ENCODE measurements at regions of chr12 and their contacts with region 1.

Region 1: DNA sequence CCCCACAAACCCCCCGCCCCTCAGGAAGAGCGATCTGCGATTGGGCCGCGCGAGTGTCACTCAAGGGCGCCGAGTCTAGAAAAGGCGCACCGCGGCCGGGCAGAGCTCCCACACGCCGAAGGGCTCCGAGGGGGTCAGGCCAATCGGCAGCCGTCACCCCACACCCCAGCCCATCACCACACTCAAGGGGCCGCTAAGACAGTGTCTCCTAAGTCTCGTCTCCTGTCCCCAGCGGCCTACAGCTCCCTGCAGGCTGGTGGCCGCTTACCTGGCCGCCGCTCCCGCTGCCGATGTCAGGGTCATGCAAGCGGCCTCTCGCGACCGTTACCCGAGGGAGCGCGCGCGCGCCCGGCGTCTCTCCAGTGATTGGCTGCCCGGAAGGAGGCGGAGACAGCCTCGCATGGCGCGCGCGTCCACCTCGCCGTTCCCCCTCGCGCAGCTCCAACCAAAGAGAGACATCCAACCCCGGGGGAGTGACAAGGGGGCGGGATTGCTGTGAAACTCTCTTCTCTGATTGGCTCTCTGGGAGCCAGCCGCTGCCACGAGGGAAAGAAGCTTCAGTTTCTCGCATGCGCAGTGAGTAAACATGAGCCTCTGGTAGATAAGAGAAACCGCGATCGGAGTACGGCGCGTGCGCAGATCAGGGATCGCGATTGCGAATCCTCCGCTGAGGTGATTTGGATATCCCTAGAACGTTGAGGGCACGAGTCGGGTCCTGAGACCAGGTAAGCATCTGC is at the starts of genes MPHOSPH9 and MTRFR:
- DNase-seq: peak; percentile 100
- H3K4me3 ChIP-seq: peak within 1 kb of the TSS; percentile 77 to 93 (median 89)
- H3K27ac ChIP-seq: peak within 1 kb of the TSS; percentile 72
- H3K4me1 ChIP-seq: peaks cover 12% of the 10 kb centered on the region
- H3K27me3 ChIP-seq: no peaks in the 10 kb centered on the region
- CTCF ChIP-seq: no peak
- total RNA-seq, gene MPHOSPH9: 23.2 to 30.2 TPM
- total RNA-seq, gene MTRFR: 11.5 to 20.5 TPM

Region 2: DNA sequence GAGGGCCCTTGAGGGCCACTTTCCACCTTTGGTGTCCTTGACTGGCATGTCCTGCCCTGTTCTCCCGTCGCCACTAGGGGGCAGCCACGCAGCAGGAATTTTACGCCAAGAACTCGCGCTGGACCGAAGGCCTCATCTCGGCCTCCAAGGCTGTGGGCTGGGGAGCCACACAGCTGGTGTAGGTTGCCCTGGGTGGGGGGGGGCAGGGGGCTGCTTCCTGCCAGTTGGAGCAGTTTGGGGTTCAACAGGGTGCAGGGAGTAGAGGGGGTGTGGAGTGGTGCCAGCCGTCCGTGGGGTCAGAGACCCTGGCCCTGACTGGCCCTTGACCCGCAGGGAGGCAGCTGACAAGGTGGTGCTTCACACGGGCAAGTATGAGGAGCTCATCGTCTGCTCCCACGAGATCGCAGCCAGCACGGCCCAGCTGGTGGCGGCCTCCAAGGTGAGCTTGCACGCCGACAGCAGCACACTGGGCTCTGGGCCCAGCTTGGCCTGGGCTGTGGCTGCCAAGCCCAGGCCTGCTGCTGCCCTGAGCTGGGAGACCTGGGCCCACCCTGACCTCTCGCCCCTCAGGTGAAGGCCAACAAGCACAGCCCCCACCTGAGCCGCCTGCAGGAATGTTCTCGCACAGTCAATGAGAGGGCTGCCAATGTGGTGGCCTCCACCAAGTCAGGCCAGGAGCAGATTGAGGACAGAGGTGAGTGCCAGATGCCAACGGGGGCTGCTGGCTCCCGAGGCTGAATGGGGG is 372.5 kb before region 1 on chr12:
- CTCF ChIA-PET with region 1: interaction called, 3 read pairs
- dilution Hi-C with region 1: no loop called
- in situ Hi-C with region 1: no loop called
- intact Hi-C with region 1: loop called (anchors 1 kb)
- DNase-seq: peak; percentile 64
- H3K4me3 ChIP-seq: no peak overlapping the region
- H3K27ac ChIP-seq: no peak overlapping the region
- H3K4me1 ChIP-seq: peaks cover 26% of the 10 kb centered on the region
- H3K27me3 ChIP-seq: no peaks in the 10 kb centered on the region
- CTCF ChIP-seq: peak; percentile 66 to 94

Region 3: DNA sequence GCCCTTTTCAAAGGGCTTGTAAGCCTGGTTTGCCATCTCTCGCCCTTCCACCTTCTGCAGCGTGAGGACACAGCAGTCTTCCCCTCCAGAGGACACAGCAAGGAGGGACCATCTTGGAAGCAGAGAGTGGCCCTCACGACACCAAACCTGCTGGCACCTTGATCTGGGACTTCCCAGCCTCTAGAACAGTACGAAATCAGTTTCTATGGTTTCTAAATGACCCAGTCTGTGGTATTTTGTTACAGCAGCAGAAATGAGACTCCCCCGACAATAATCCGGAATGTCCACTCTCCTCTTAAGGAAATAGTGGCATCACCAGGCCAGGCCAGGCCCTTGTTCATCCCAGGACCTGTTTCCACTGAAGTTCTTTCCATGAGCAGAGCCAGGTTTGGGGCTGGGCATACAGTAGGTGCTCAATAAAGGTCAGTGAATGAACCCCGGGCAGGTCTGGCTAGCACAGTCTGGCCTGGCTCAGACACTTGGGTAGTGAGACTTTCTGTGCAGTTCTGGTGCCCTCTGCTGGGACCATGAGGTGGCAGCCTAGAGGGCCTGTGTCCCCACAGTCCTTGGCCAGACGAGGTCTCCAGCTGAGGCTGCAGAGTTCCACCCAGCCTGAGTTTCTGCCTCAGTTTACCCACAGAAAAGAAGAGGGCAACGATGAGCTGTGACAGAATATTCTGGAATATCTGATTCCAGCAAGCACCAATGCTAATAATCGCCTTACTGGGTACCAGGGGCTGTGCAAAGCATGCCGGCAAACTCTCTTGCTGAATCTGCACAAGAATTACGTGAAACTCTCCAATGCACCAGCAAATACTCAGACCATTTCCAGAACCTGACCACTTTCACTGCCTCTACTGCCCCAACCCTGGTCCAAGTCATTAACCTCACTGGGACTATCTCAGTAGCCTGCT is 280.7 kb before region 1 on chr12:
- CTCF ChIA-PET with region 1: no interaction called
- dilution Hi-C with region 1: no loop called
- in situ Hi-C with region 1: no loop called
- intact Hi-C with region 1: loop called (anchors 1 kb)
- DNase-seq: peak; percentile 61
- H3K4me3 ChIP-seq: no peak overlapping the region
- H3K27ac ChIP-seq: no peak overlapping the region
- H3K4me1 ChIP-seq: peaks cover 29% of the 10 kb centered on the region
- H3K27me3 ChIP-seq: no peaks in the 10 kb centered on the region
- CTCF ChIP-seq: peak; percentile 92 to 96

Region 4: GRCh38 chr12:122974274-122974891 is 258.6 kb before region 1 on chr12:
- CTCF ChIA-PET with region 1: no interaction called
- dilution Hi-C with region 1: loop called (anchors 5 kb)
- in situ Hi-C with region 1: loop called in 1 of 2 experiments (anchors 5 kb)
- intact Hi-C with region 1: loop called (anchors 2 kb)
- DNase-seq: peak; percentile 98
- H3K4me3 ChIP-seq: peak overlapping the region; percentile 82 to 93 (median 87)
- H3K27ac ChIP-seq: peak overlapping the region; percentile 83
- H3K4me1 ChIP-seq: peaks cover 18% of the 10 kb centered on the region
- H3K27me3 ChIP-seq: no peaks in the 10 kb centered on the region
- CTCF ChIP-seq: no peak

Region 5: GRCh38 chr12:123150744-123151456 is 82.1 kb before region 1 on chr12 and contains the start of gene PITPNM2:
- CTCF ChIA-PET with region 1: interaction called, 3 read pairs
- dilution Hi-C with region 1: loop called (anchors 5 kb)
- in situ Hi-C with region 1: no loop called
- intact Hi-C with region 1: loop called (anchors 2 kb)
- DNase-seq: peak; percentile 57
- H3K4me3 ChIP-seq: peak within 1 kb of the TSS; percentile 79 to 80 (median 79)
- H3K27ac ChIP-seq: peak within 1 kb of the TSS; percentile 62
- H3K4me1 ChIP-seq: peaks cover 18% of the 10 kb centered on the region
- H3K27me3 ChIP-seq: no peaks in the 10 kb centered on the region
- CTCF ChIP-seq: no peak
- total RNA-seq, gene PITPNM2: 7.5 to 14.9 TPM

Region 6: DNA sequence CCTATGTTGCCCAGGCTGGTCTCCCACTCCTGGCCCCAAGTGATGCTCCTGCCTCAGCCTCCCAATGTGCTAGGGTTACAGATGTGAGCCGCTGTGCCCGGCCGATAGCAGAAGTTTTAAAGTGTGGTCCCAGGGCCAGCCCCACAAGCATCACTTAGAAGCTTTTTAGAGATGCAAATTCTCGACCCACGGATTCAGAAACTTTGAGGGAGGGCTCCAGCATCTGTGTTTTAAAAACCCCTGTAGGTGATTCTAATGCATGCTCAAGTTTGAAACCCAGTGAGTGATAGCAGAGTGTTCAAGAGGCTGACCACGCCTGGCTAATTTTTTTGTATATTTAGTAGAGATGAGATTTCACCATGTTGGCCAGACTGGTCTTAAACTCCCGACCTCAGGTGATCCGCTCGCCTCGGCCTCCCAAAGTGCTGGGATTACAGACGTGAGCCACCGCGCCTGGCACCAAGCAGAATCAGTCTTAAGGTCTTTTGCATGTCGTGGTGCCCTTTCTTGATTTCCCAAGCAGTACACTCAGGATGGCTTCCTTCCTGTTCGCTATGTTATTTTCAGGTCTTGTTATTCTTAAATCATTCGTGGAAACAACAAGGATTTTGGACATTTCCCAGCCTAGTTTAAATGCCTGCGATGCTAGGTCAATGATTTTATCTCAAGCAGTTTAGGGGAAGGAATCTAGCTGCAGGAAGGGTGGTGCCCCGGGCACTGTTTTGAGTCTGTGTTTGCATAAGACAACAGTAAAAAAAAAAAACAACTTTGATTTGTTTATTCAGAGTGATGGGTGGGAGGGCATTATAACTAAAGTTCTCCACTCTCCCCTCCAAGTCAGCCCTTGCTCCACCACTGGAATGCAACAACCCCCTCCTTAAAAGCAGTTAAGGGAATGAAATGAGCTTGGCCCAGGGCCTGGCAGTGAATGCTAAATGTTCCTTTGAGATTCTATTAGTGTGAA is 212.7 kb after region 1 on chr12:
- CTCF ChIA-PET with region 1: no interaction called
- dilution Hi-C with region 1: no loop called
- in situ Hi-C with region 1: no loop called
- intact Hi-C with region 1: no loop called
- DNase-seq: no peak
- H3K4me3 ChIP-seq: no peak overlapping the region
- H3K27ac ChIP-seq: no peak overlapping the region
- H3K4me1 ChIP-seq: no peaks in the 10 kb centered on the region
- H3K27me3 ChIP-seq: no peaks in the 10 kb centered on the region
- CTCF ChIP-seq: no peak

Measured in mammary epithelial cell (primary cell).